ENCODE measurements at regions of chr19 and their contacts with region 1.

Region 1: GRCh38 chr19:14347999-14348889 is 33.0 kb upstream of the ADGRE5 start:
- DNase-seq: no peak
- ATAC-seq: peak; percentile 90
- H3K4me3 ChIP-seq: no peak overlapping the region
- H3K27ac ChIP-seq: no peak overlapping the region; the same call in 1 of the 2 replicates
- H3K4me1 ChIP-seq: peaks cover 9% of the 10 kb centered on the region
- H3K27me3 ChIP-seq: no peaks in the 10 kb centered on the region
- CTCF ChIP-seq: peak; percentile 97 to 99 (median 98)
- EP300 ChIP-seq: no peak
- POLR2A ChIP-seq: no peak
- RAD21 ChIP-seq: peak; percentile 98

Region 2: GRCh38 chr19:14136509-14137281 is 211.5 kb before region 1 on chr19 and contains the start of gene ASF1B:
- CTCF ChIA-PET with region 1: interaction called, 34 read pairs
- POLR2A ChIA-PET with region 1: interaction called, 4 read pairs
- RAD21 ChIA-PET with region 1: interaction called, 25 read pairs
- SMC1A ChIA-PET with region 1: interaction called, 18 read pairs
- in situ Hi-C with region 1: no loop called
- intact Hi-C with region 1: loop called (anchors 2 kb)
- DNase-seq: peak; percentile 99
- ATAC-seq: peak; percentile 93
- H3K4me3 ChIP-seq: peak within 1 kb of the TSS; percentile 98
- H3K27ac ChIP-seq: peak within 1 kb of the TSS; percentile 79
- H3K4me1 ChIP-seq: 0 out of 2 replicates have a peak, but pooled peaks cover 8% of the 10 kb centered on the region
- H3K27me3 ChIP-seq: no peaks in the 10 kb centered on the region
- CTCF ChIP-seq: peak; percentile 84 to 98 (median 95)
- EP300 ChIP-seq: no peak
- POLR2A ChIP-seq: peak; percentile 98
- RAD21 ChIP-seq: peak; percentile 91
- polyA plus RNA-seq, gene ASF1B: 10.4 to 23.1 TPM

Region 3: DNA sequence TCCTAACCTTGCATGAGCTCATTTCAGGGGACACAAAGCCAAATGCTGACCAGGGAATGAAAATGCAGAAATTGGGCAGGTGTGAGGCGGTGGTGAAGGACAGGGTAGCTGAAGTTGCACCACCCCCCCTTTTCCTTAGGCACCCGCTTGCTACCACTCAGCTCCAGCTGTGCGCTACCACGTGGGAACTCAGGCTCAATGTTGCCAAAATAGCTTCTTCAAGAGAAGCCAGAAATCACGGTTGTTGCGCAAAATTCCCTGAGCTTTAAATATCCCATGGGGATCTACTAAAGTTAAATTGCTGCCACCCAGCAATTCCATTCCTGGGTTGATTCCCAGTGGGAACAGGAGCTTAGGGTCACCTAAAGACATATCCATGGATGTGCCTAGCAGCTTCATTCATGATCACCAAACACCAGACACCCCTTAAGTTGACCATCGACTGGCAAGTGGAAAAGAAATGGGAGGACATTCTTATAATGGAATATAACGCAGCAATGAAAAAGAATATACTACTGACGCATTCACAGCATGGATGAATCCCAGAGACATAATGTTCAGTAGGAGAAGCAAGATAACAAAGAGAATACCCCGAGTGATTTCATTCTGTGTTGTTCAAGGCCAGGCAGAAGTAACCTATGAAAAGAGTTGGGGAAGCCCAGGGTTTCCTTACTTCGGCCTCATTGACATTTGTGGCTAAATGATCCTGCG is 129.5 kb before region 1 on chr19:
- CTCF ChIA-PET with region 1: interaction called, 24 read pairs
- POLR2A ChIA-PET with region 1: no interaction called
- RAD21 ChIA-PET with region 1: interaction called, 7 read pairs
- SMC1A ChIA-PET with region 1: interaction called, 4 read pairs
- in situ Hi-C with region 1: no loop called
- intact Hi-C with region 1: no loop called
- DNase-seq: no peak
- ATAC-seq: no peak
- H3K4me3 ChIP-seq: no peak overlapping the region
- H3K27ac ChIP-seq: no peak overlapping the region
- H3K4me1 ChIP-seq: no peaks in the 10 kb centered on the region
- H3K27me3 ChIP-seq: no peaks in the 10 kb centered on the region
- CTCF ChIP-seq: no peak
- EP300 ChIP-seq: no peak
- POLR2A ChIP-seq: no peak
- RAD21 ChIP-seq: no peak

Region 4: GRCh38 chr19:14318873-14319272 is 29.4 kb before region 1 on chr19:
- CTCF ChIA-PET with region 1: interaction called, 22 read pairs
- POLR2A ChIA-PET with region 1: no interaction called
- RAD21 ChIA-PET with region 1: no interaction called
- SMC1A ChIA-PET with region 1: interaction called, 6 read pairs
- in situ Hi-C with region 1: no loop called
- intact Hi-C with region 1: no loop called
- DNase-seq: no peak
- ATAC-seq: peak; percentile 90
- H3K4me3 ChIP-seq: no peak overlapping the region
- H3K27ac ChIP-seq: no peak overlapping the region
- H3K4me1 ChIP-seq: no peaks in the 10 kb centered on the region
- H3K27me3 ChIP-seq: no peaks in the 10 kb centered on the region
- CTCF ChIP-seq: peak; percentile 45 to 77 (median 68); a peak in 5 of 6 replicates
- EP300 ChIP-seq: no peak
- POLR2A ChIP-seq: no peak
- RAD21 ChIP-seq: peak; percentile 78

Region 5: GRCh38 chr19:14366498-14366915 is 18.3 kb after region 1 on chr19:
- CTCF ChIA-PET with region 1: interaction called, 46 read pairs
- POLR2A ChIA-PET with region 1: interaction called, 9 read pairs
- RAD21 ChIA-PET with region 1: interaction called, 5 read pairs
- SMC1A ChIA-PET with region 1: interaction called, 5 read pairs
- in situ Hi-C with region 1: no loop called
- intact Hi-C with region 1: no loop called
- DNase-seq: peak; percentile 98
- ATAC-seq: peak; percentile 63
- H3K4me3 ChIP-seq: no peak overlapping the region
- H3K27ac ChIP-seq: peak overlapping the region; percentile 36; the same call in 1 of the 2 replicates
- H3K4me1 ChIP-seq: peaks cover 59% of the 10 kb centered on the region
- H3K27me3 ChIP-seq: no peaks in the 10 kb centered on the region
- CTCF ChIP-seq: no peak
- EP300 ChIP-seq: no peak
- POLR2A ChIP-seq: peak; percentile 48; the same call in 1 of the 2 replicates
- RAD21 ChIP-seq: no peak

Region 6: DNA sequence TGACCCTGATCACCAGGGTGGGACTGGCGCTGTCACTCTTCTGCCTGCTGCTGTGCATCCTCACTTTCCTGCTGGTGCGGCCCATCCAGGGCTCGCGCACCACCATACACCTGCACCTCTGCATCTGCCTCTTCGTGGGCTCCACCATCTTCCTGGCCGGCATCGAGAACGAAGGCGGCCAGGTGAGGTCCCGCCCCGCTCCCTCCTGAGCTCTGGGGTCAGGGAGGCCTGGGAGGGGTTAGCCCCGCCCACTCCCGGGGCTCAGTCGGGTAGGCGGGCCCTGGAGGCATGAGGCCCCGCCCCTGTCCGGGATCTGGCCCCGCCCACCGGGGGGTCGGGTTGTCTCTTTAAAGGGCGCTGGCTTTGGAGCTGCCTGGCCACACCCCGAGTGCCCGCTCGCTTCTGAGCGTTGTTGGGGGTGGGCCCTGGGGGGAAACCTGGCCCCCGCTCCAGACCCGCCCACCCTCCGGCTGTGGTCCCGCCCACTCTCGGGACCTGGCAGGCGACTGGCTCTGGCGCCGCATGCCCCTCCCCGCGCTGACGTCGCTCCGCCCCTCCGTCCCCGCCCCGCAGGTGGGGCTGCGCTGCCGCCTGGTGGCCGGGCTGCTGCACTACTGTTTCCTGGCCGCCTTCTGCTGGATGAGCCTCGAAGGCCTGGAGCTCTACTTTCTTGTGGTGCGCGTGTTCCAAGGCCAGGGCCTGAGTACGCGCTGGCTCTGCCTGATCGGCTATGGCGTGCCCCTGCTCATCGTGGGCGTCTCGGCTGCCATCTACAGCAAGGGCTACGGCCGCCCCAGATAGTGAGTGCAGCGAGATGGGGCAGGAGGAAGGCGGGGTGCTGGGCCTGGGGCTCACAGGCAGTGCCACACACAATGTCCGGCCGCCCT is 57.8 kb after region 1 on chr19:
- CTCF ChIA-PET with region 1: interaction called, 35 read pairs
- POLR2A ChIA-PET with region 1: interaction called, 3 read pairs
- RAD21 ChIA-PET with region 1: interaction called, 9 read pairs
- SMC1A ChIA-PET with region 1: interaction called, 5 read pairs
- in situ Hi-C with region 1: no loop called
- intact Hi-C with region 1: no loop called
- DNase-seq: peak; percentile 48
- ATAC-seq: peak; percentile 86
- H3K4me3 ChIP-seq: no peak overlapping the region
- H3K27ac ChIP-seq: no peak overlapping the region
- H3K4me1 ChIP-seq: peaks cover 3% of the 10 kb centered on the region; the same call in 1 of the 2 replicates
- H3K27me3 ChIP-seq: no peaks in the 10 kb centered on the region
- CTCF ChIP-seq: peak; percentile 66 to 94 (median 89)
- EP300 ChIP-seq: no peak
- POLR2A ChIP-seq: peak; percentile 57
- RAD21 ChIP-seq: peak; percentile 94

Region 7: GRCh38 chr19:14432791-14433553 is 84.7 kb after region 1 on chr19 and contains the start of gene PKN1:
- CTCF ChIA-PET with region 1: no interaction called
- POLR2A ChIA-PET with region 1: no interaction called
- RAD21 ChIA-PET with region 1: no interaction called
- SMC1A ChIA-PET with region 1: no interaction called
- in situ Hi-C with region 1: no loop called
- intact Hi-C with region 1: no loop called
- DNase-seq: no peak
- ATAC-seq: peak; percentile 69
- H3K4me3 ChIP-seq: peak within 1 kb of the TSS; percentile 90
- H3K27ac ChIP-seq: peak within 1 kb of the TSS; percentile 65
- H3K4me1 ChIP-seq: peaks cover 22% of the 10 kb centered on the region
- H3K27me3 ChIP-seq: no peaks in the 10 kb centered on the region
- CTCF ChIP-seq: no peak
- EP300 ChIP-seq: no peak
- POLR2A ChIP-seq: peak; percentile 34; the same call in 1 of the 2 replicates
- RAD21 ChIP-seq: no peak
- polyA plus RNA-seq, gene PKN1: 1.0 to 1.4 TPM